ENCODE measurements at regions of chr3 and their contacts with region 1.

Region 1: DNA sequence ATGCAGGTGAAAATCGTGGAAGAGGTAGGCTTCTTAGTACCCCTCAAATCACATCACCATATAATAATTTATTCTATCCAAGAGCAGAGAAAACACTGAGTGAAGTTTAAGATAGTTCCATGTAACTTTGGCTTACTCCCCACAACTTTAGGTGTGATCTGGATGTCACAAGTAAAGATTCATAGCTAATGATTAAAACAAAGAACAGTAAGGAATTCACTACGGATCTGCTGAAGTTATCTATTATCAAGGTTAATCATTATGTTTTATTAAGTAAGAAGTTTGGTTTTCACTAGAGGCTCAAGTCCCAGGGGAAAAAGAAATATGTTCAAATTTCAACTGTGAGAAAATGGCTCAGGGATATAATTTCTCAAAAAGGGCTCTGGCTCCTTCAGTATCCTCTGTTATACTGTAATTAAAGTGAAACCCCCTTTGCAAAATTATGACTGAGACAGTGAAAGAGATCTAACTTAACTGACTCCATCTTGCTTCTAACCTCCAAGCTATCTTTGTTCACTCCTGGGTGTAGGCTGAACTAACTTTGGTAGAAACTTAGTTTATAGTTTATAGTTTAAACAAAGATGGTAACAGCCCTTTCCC is 17.1 kb downstream of the CD80 start:
- DNase-seq: no peak
- H3K4me3 ChIP-seq: no peak overlapping the region
- H3K4me3 Mint-ChIP-seq: no peak overlapping the region
- H3K27ac ChIP-seq: no peak overlapping the region
- H3K27ac Mint-ChIP-seq: no peak overlapping the region
- H3K4me1 ChIP-seq: peaks cover 0 to 4% of the 10 kb centered on the region in 2 donors
- H3K4me1 Mint-ChIP-seq: peaks cover 10% of the 10 kb centered on the region
- H3K27me3 ChIP-seq: no peaks in the 10 kb centered on the region
- H3K27me3 Mint-ChIP-seq: peaks cover 0 to 3% (median 0%) of the 10 kb centered on the region in 3 donors
- CTCF ChIP-seq: no peak

Region 2: GRCh38 chr3:119508172-119508845 is 34.0 kb before region 1 on chr3:
- intact Hi-C with region 1: loop called in 1 of 2 experiments (anchors 5 kb)
- DNase-seq: no peak
- H3K4me3 ChIP-seq: no peak overlapping the region
- H3K4me3 Mint-ChIP-seq: no peak overlapping the region
- H3K27ac ChIP-seq: no peak overlapping the region
- H3K27ac Mint-ChIP-seq: peak overlapping the region in 2 of 7 donors; percentile 8 to 58
- H3K4me1 ChIP-seq: no peaks in the 10 kb centered on the region
- H3K4me1 Mint-ChIP-seq: peaks cover 9% of the 10 kb centered on the region
- H3K27me3 ChIP-seq: no peaks in the 10 kb centered on the region
- H3K27me3 Mint-ChIP-seq: no peaks in the 10 kb centered on the region
- CTCF ChIP-seq: no peak

Measured in CD14-positive monocyte (primary cell).